Ovary (tissue), 10 donors: ENCODE measurements at regions of chr7 and their contacts with region 1.

Region 1: DNA sequence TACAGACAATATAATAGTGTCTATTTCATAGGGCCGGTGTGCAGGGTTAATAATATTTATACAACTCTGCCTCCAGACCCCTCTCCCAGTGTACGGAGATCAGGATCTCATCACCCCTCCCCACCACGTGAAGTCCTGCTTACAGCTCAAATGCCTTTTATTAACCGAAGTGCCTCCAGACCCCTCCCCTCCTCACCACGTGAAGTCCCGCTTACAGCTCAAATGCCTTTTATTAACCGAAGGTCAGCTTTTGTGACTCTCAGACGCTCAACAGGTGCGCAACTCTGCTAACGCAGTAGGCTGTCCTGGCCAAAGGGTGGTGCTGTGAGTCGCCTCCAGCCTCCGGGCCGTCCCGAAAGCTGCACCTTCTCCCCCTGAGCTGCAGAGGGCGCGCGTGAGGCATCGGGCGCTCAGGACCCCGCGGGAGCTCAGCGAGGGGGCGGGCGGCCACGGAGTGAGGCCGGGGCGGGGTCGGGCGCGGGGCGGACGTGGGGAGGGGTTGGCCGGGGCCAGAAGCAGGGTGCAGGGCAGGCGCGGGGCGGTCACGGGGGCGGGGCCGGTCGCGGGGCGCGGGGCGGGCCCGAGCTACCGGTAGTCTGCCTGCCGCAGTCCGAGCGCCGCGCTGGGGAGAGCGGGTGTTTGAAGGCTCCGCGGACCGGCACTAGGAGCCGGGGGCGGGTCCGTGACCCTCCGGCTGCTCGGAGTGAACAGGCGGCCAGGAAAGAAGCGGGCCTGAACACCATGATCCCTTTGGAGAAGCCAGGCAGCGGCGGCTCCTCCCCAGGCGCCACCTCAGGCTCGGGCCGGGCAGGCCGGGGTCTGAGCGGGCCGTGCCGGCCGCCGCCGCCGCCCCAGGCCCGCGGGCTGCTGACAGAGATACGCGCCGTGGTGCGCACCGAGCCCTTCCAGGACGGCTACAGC is at the start of gene STK17A:
- DNase-seq: peak; percentile 86 to 95 (median 91)
- H3K4me3 ChIP-seq: peak within 1 kb of the TSS; percentile 81
- H3K27ac ChIP-seq: peak within 1 kb of the TSS; percentile 76 to 93
- H3K4me1 ChIP-seq: peaks cover 4% of the 10 kb centered on the region
- H3K27me3 ChIP-seq: no peaks in the 10 kb centered on the region
- CTCF ChIP-seq: peak; percentile 80 to 99 (median 99)
- EP300 ChIP-seq: no peak
- POLR2A ChIP-seq: peak; percentile 53
- total RNA-seq, gene STK17A: 9.9 to 19.9 (median 12.7) TPM

Region 2: DNA sequence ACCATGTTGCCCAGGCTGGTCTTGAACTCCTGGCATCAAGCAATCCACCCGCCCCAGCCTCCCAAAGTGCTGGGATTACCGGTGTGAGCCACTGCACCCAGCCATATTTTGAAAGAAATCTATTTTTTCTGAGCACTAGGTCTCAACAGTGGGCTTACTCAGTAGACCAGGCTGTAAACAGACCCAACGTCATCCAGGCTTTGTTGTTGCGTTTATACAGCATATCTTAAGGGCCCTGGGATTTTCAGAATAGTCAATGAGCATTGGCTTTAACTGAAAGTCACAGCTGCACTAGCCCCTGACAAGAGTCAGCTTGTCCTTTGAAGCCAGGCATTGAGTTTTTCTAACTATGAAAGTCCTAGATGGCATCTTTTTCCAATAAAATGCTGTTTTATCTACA is 50.0 kb after region 1 on chr7:
- intact Hi-C with region 1: no loop called
- DNase-seq: no peak
- H3K4me3 ChIP-seq: no peak overlapping the region
- H3K27ac ChIP-seq: no peak overlapping the region
- H3K4me1 ChIP-seq: no peaks in the 10 kb centered on the region
- H3K27me3 ChIP-seq: no peaks in the 10 kb centered on the region
- CTCF ChIP-seq: no peak
- EP300 ChIP-seq: no peak
- POLR2A ChIP-seq: no peak

Region 3: GRCh38 chr7:43647673-43648472 is 65.1 kb after region 1 on chr7:
- intact Hi-C with region 1: loop called in 1 of 4 experiments (anchors 10 kb)
- DNase-seq: peak in 4 of 5 donors; percentile 51 to 70 (median 52)
- H3K4me3 ChIP-seq: no peak overlapping the region
- H3K27ac ChIP-seq: peak overlapping the region; percentile 63 to 75
- H3K4me1 ChIP-seq: peaks cover 40% of the 10 kb centered on the region
- H3K27me3 ChIP-seq: no peaks in the 10 kb centered on the region
- CTCF ChIP-seq: no peak
- EP300 ChIP-seq: no peak
- POLR2A ChIP-seq: no peak

Region 4: GRCh38 chr7:43700059-43700501 is 117.3 kb after region 1 on chr7:
- intact Hi-C with region 1: loop called (anchors 5 kb)
- DNase-seq: no peak
- H3K4me3 ChIP-seq: no peak overlapping the region
- H3K27ac ChIP-seq: no peak overlapping the region
- H3K4me1 ChIP-seq: no peaks in the 10 kb centered on the region
- H3K27me3 ChIP-seq: no peaks in the 10 kb centered on the region
- CTCF ChIP-seq: peak; percentile 39 to 80 (median 68)
- EP300 ChIP-seq: no peak
- POLR2A ChIP-seq: no peak

Region 5: DNA sequence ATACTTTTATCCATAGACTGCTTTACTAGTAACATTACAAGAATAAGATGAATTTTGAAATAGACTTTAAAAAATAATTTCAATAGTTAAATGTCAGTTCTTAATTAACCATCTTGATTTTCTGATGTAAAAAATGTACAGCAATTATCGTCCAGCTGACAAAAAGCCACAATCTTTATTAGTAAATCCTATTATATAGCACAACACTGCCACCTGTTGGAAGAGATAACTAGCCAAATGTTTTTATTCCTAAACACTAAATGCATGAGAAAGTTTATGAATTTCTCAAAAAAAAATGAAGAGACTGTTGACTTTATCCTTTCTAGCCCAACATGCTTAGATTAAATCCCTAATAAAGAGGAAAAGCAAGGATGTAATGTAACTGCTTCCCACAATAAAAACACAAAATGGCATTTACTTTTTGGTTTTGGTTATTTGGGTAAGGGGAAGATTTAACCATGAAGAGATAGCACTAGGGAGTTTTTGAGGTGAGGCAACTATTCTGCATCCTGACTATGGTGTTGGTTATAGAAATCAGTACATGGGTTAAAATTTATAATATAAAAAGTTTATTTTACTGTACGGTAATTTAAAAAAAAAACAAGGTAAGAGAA is 138.5 kb after region 1 on chr7:
- intact Hi-C with region 1: loop called in 1 of 4 experiments (anchors 2 kb)
- DNase-seq: no peak
- H3K4me3 ChIP-seq: no peak overlapping the region
- H3K27ac ChIP-seq: no peak overlapping the region
- H3K4me1 ChIP-seq: peaks cover 3% of the 10 kb centered on the region
- H3K27me3 ChIP-seq: no peaks in the 10 kb centered on the region
- CTCF ChIP-seq: peak in 2 of 3 donors; percentile 35 to 80
- EP300 ChIP-seq: no peak
- POLR2A ChIP-seq: no peak

Region 6: DNA sequence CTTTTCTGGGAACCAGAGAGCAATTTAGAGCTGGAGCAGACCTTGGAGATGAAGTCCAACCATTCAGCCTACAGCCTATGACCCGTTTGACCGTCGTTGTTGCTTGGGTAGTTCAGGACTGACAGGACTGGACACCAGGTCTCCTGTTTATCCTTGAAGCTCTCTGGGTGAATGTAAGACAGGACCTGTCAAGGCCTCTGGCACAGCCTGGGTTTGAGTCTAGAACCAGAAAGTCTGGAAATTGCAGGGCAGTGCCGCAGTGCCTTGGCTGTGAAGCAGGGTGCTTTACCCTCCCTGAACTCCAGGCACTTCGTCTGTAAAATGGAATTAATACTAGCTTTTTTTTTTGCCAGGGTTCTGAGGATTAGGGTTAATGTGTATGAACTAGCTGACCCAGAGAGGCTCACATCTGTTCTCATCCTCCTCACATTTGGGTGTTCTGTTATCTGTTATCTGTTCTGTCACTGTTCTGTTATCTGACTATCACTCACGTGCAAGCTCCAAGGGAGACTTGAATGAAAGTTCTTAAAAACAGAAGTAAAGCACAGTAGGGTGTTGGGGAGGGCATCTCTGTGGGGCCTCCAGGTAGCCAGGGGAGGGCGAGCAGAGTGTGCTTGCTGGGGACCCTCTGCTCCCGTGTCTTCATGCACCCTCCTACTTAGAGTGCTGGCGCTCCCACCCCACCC is 185.6 kb after region 1 on chr7:
- intact Hi-C with region 1: no loop called
- DNase-seq: no peak
- H3K4me3 ChIP-seq: no peak overlapping the region
- H3K27ac ChIP-seq: no peak overlapping the region
- H3K4me1 ChIP-seq: peaks cover 3% of the 10 kb centered on the region
- H3K27me3 ChIP-seq: no peaks in the 10 kb centered on the region
- CTCF ChIP-seq: no peak
- EP300 ChIP-seq: no peak
- POLR2A ChIP-seq: no peak

Region 7: DNA sequence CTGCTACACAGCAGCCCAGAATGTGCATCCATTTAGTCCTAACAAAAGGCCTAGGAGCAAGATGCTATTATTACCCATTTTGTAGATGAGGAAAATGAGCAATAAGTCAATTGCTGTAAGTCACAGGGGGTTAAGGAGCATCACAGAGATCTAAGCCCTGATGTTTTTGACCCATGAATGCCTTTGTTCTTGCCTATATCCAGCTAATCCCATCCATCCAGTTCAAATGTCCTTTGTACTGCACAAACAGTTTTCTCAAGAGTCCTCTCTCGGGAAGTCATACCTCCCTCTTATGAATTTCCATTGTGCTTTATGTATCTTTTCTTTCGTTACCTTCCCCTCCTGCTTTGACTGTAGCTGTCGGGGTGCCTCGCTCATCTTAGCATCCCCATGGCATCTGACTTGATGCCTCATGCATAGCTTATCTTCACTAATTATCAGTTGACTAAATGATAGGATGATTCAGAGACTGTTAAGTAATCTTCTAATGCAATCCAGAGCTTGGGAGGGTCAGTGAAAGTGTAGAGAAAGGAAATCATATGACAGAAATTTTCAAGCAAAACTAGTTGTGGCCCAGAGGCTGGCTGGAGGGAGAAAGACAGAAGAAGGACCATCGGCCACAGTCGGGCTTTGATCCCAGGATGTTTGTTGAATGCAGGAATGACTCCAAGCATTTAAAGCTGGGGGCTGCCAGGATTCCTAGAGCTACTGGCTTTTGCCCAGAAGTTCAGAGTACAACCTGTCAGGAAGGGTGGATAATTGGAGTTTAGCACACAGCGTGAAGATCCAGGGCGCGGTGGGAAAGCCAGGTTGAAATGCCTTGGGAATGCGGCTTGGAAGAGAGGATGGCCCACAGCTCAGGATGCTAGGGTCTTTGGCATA is 199.2 kb after region 1 on chr7:
- intact Hi-C with region 1: no loop called
- DNase-seq: no peak
- H3K4me3 ChIP-seq: no peak overlapping the region
- H3K27ac ChIP-seq: no peak overlapping the region
- H3K4me1 ChIP-seq: peaks cover 3% of the 10 kb centered on the region
- H3K27me3 ChIP-seq: no peaks in the 10 kb centered on the region
- CTCF ChIP-seq: no peak
- EP300 ChIP-seq: no peak
- POLR2A ChIP-seq: no peak

Region 8: GRCh38 chr7:43834463-43835251 is 251.9 kb after region 1 on chr7:
- intact Hi-C with region 1: loop called in 2 of 4 experiments (anchors 2 to 5 kb)
- DNase-seq: no peak
- H3K4me3 ChIP-seq: no peak overlapping the region
- H3K27ac ChIP-seq: no peak overlapping the region
- H3K4me1 ChIP-seq: no peaks in the 10 kb centered on the region
- H3K27me3 ChIP-seq: no peaks in the 10 kb centered on the region
- CTCF ChIP-seq: no peak
- EP300 ChIP-seq: no peak
- POLR2A ChIP-seq: no peak

Region 9: DNA sequence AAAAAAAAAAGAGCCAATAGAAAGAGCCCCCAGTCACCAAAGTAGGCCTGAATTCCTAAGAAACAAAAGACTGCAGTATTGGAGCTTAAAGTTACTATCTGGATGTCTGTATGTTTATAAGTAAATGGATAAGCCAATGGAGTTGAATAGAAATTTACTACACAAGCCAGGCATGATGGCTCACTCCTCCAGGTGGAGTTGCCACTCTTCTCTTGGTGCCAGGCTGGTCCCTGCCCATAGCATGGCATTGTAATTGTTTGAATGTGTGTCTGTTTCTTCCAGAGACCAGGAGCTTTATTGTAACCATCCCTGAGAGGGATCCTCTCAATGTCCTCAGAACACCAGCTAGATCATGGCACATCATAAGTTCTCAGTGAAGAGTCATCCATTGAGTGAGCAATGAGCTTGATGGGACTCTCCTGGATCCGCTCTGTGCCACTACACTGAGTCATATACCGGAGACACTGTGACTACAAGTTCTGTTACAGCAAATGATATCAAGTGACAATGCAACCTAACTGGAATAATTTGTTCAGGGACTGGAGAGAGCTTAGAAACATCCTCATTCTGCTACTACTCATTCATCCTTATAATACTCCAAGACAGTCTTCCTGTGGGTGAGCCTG is 261.4 kb after region 1 on chr7:
- intact Hi-C with region 1: loop called in 3 of 4 experiments (anchors 2 to 5 kb)
- DNase-seq: no peak
- H3K4me3 ChIP-seq: no peak overlapping the region
- H3K27ac ChIP-seq: no peak overlapping the region
- H3K4me1 ChIP-seq: no peaks in the 10 kb centered on the region
- H3K27me3 ChIP-seq: no peaks in the 10 kb centered on the region
- CTCF ChIP-seq: no peak
- EP300 ChIP-seq: no peak
- POLR2A ChIP-seq: no peak

Region 10: DNA sequence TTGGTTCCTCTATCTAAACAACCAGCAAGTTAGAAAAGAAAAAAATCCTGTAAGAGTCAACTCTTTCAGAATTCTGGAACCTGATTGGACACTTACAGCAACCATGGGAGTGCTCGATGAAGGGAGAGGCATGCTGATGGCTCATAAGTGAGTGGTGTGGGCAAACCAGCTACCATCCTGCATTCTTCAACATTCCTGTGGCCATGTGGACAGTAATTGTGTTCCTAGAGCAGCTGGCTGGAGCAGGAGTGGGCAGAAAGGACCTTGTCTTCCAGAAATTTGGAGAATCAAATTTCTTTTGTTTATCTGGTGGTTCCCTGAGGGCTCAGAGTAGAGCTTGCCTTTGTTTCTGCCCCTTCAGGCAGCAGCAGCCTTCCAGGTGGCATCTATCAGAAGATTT is 580.8 kb after region 1 on chr7:
- intact Hi-C with region 1: no loop called
- DNase-seq: no peak
- H3K4me3 ChIP-seq: no peak overlapping the region
- H3K27ac ChIP-seq: no peak overlapping the region
- H3K4me1 ChIP-seq: no peaks in the 10 kb centered on the region
- H3K27me3 ChIP-seq: no peaks in the 10 kb centered on the region
- CTCF ChIP-seq: no peak
- EP300 ChIP-seq: no peak
- POLR2A ChIP-seq: no peak